ENCODE measurements at regions of chr19 and their contacts with region 1.

Region 1: GRCh38 chr19:13262450-13262849 is 112.2 kb downstream of the IER2 start:
- DNase-seq: no peak
- H3K4me3 Mint-ChIP-seq: no peak overlapping the region
- H3K27ac Mint-ChIP-seq: no peak overlapping the region
- H3K4me1 Mint-ChIP-seq: peaks cover 11% of the 10 kb centered on the region
- H3K27me3 Mint-ChIP-seq: peaks cover 54% of the 10 kb centered on the region

Region 2: GRCh38 chr19:13150187-13150930 is 112.1 kb before region 1 on chr19 and contains the starts of genes IER2 and STX10:
- CTCF ChIA-PET with region 1: no interaction called
- DNase-seq: peak; percentile 96
- H3K4me3 Mint-ChIP-seq: peak within 1 kb of the TSS; percentile 99
- H3K27ac Mint-ChIP-seq: peak within 1 kb of the TSS; percentile 99
- H3K4me1 Mint-ChIP-seq: peaks cover 28% of the 10 kb centered on the region
- H3K27me3 Mint-ChIP-seq: peaks cover 15% of the 10 kb centered on the region

Region 3: DNA sequence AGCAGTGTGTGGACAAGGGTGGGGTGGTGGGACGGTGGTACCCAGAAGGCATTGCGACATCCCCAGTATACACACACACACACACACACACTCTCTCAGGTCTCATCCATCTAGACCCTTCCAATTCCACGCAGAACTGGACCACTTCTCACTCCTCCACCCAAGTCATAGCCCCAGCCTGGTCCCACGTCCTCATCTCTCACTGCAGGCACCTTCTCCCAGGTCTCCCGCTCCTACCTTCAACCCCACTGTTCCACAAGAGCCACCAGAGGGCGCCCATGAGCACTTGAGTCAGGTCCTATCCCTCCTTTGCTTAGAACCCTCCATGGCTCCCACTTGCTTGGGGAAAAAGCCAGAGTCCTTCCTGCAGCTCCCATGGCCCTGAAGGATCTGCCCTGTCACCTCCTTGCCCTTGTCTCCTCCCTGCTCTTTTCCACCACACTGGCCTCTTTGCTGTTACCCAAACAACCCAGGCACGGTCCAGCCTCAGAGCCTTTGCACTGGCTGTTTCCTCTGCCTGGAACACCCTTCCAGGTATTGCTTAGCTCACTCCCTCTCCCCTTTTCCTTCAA is 49.6 kb before region 1 on chr19:
- CTCF ChIA-PET with region 1: interaction called, 11 read pairs
- DNase-seq: peak; percentile 84
- H3K4me3 Mint-ChIP-seq: no peak overlapping the region
- H3K27ac Mint-ChIP-seq: no peak overlapping the region
- H3K4me1 Mint-ChIP-seq: peaks cover 45% of the 10 kb centered on the region
- H3K27me3 Mint-ChIP-seq: peaks cover 12% of the 10 kb centered on the region

Region 4: DNA sequence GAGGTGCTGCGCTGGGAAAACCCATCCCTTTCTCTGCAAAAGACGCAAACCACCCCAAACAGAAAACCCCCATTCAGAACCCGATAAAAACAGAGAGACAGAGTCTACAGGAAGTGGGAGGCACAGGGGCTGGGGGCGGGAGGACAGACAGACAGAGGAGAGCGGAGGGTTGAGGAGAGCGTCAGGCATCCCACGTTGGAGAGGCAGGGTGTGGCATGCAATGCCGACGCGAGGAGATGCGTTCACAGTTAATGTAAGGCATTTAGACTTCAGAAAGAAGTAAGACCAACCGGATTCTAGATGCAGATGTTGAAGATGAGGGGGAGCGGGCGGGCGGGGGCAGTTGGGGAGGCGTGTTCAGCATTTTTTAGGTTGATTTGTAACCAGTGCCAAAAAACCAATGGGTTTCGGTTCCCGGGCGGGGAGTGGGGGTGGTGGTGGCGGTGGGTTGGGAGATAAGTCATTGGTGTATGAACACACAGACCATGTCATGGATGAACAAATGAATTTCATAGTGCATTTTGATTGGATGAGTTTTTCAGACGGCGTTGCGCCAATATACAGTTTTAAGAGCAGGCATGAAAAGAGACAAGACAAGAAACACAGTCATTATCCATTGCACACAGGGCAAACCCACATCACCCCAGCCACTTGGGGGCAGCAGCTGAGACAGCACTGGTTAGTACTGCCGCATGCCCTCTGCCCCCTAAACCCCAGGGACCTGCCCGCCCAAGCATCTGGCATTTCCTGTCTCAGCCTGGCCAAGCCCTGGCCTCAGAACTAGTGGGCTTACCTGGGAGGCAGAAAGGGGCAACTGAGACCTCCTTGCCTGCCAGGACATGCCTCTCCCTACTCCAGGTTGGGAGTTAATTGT is 21.0 kb before region 1 on chr19:
- CTCF ChIA-PET with region 1: no interaction called
- DNase-seq: no peak
- H3K4me3 Mint-ChIP-seq: no peak overlapping the region
- H3K27ac Mint-ChIP-seq: no peak overlapping the region
- H3K4me1 Mint-ChIP-seq: peaks cover 21% of the 10 kb centered on the region
- H3K27me3 Mint-ChIP-seq: peaks cover 35% of the 10 kb centered on the region